IMR-90 (cell line): ENCODE measurements at regions of chr1 and their contacts with region 1.

Region 1: GRCh38 chr1:89472952-89473351 is 51.7 kb upstream of the LRRC8B start:
- DNase-seq: no peak
- ATAC-seq: no peak
- H3K4me3 ChIP-seq: no peak overlapping the region
- H3K27ac ChIP-seq: no peak overlapping the region
- H3K4me1 ChIP-seq: no peaks in the 10 kb centered on the region
- H3K27me3 ChIP-seq: no peaks in the 10 kb centered on the region
- CTCF ChIP-seq: no peak
- POLR2A ChIP-seq: no peak
- RAD21 ChIP-seq: no peak

Region 2: DNA sequence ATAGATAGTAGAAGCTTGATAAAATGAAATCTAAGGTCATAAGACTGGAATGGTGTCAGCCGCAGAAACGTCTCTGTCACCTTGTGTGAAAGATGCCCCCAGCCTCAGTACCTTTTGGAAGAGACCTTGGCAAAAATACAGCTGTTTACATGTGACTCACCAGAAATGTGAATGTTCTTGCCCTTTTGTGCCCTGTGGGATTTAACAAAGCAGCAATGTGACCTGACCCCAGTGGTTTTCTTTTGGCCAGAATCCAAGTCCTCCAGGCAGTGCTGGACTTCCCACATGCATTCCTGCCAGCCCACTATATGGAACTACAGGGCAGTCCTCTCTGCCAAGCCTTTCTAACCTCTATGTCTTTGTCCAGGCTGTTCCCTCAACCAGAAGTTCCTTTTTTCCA is 132.7 kb after region 1 on chr1:
- CTCF ChIA-PET with region 1: no interaction called
- POLR2A ChIA-PET with region 1: no interaction called
- dilution Hi-C with region 1: no loop called
- in situ Hi-C with region 1: loop called (anchors 10 kb)
- intact Hi-C with region 1: no loop called
- DNase-seq: peak; percentile 55
- ATAC-seq: peak; percentile 38; the same call in 1 of the 2 replicates
- H3K4me3 ChIP-seq: no peak overlapping the region
- H3K27ac ChIP-seq: no peak overlapping the region
- H3K4me1 ChIP-seq: peaks cover 3% of the 10 kb centered on the region
- H3K27me3 ChIP-seq: no peaks in the 10 kb centered on the region
- CTCF ChIP-seq: no peak
- POLR2A ChIP-seq: no peak
- RAD21 ChIP-seq: no peak

Region 3: DNA sequence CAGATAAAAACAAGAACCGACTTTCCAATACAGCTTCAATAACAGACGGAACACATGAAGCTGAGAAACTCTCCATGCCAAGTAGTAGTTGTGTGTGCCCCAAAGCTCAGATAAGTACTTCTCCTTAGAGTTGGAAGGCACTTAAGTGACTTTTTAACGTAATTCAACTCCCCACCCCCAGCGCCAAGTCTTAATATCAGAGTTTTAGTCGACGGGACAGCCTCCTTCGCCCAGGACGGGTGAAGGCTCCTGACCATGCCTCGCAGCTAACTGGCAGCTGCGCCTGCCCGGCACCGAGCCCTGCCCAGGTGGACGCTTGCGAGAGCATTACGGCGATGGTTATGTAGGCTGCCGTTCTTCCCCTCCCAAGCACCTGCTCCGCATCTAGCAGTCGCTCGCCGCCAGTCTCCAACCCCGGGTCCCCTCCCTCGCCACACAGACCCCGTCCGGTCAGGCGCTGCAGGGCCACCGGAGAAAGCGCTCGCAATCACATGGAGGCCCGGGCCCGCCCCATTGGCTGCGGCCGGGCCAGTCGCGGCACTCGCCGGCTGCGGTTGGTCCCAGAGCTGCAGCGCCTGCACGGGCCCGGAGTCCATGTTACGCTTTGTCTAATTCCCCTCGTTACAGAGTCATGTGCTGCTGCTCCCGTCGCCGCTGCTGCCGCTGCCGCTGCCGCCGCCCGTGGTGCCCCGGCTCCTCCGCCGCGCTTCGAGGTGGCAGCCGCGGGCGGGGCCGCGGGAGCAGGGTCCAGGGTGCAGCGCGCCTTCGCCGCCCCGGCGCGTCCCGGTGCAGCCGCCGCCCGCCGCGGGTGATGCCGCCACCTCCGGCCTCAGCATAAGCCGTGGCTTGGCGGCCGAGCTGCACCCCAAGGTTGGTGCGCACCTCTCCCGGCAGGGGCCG is 347.7 kb after region 1 on chr1 and contains the start of gene LRRC8D:
- CTCF ChIA-PET with region 1: no interaction called
- POLR2A ChIA-PET with region 1: no interaction called
- dilution Hi-C with region 1: no loop called
- in situ Hi-C with region 1: no loop called
- intact Hi-C with region 1: no loop called
- DNase-seq: peak; percentile 72
- ATAC-seq: peak; percentile 97
- H3K4me3 ChIP-seq: peak within 1 kb of the TSS; percentile 81
- H3K27ac ChIP-seq: peak within 1 kb of the TSS; percentile 31; the same call in 1 of the 2 replicates
- H3K4me1 ChIP-seq: peaks cover 9% of the 10 kb centered on the region; the same call in 1 of the 2 replicates
- H3K27me3 ChIP-seq: no peaks in the 10 kb centered on the region
- CTCF ChIP-seq: no peak
- POLR2A ChIP-seq: no peak
- RAD21 ChIP-seq: no peak
- total RNA-seq, gene LRRC8D: 34.7 and 35.3 TPM in 2 replicates